ENCODE measurements at regions of chr2 and their contacts with region 1.

Region 1: GRCh38 chr2:68751397-68752339 is 17.1 kb downstream of the ARHGAP25 start:
- DNase-seq: peak; percentile 75 to 97 (median 92)

Region 2: GRCh38 chr2:68832233-68832869 is 80.7 kb after region 1 on chr2:
- intact Hi-C with region 1: loop called (anchors 10 kb)
- DNase-seq: peak in 37 of 42 donors; percentile 8 to 78 (median 40)

Region 3: GRCh38 chr2:68909793-68910674 is 158.4 kb after region 1 on chr2:
- intact Hi-C with region 1: loop called (anchors 5 kb)
- DNase-seq: peak in 40 of 42 donors; percentile 21 to 89 (median 68)

Region 4: DNA sequence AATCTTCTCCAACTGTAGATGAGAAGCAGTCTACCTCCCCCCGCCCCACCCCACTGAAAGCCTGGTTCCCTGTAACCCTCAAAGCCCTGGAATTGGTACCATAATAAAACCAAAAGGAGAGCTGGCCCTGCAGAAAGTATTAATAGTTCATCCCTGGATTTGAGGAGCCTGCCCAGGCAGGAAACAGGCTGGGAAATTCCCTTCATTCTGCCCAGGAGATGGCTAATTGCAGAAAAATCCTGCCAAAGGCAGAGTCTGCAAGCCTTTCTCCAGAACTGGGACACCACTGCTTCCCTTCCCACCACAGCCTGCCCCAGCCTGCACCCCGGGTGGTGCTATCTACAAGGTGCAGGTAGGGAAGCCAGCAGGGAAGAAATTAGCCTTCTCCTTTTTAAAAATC is 184.8 kb after region 1 on chr2:
- intact Hi-C with region 1: no loop called
- DNase-seq: peak in 1 of 42 donors; percentile 21